ENCODE measurements at regions of chr6 and their contacts with region 1.

Region 1: GRCh38 chr6:2931970-2932748 is 29.1 kb upstream of the SERPINB9 start:
- DNase-seq: peak; percentile 70 to 88 (median 74)
- H3K4me3 ChIP-seq: peak overlapping the region; percentile 24
- H3K4me3 Mint-ChIP-seq: peak overlapping the region in 2 of 7 donors; percentile 29 to 41
- H3K27ac ChIP-seq: no peak overlapping the region
- H3K27ac Mint-ChIP-seq: peak overlapping the region in 6 of 8 donors; percentile 1 to 41 (median 27)
- H3K4me1 ChIP-seq: peaks cover 20% of the 10 kb centered on the region
- H3K4me1 Mint-ChIP-seq: peaks cover 22 to 26% (median 23%) of the 10 kb centered on the region in 3 donors
- H3K27me3 ChIP-seq: no peaks in the 10 kb centered on the region
- H3K27me3 Mint-ChIP-seq: no peaks in the 10 kb centered on the region

Region 2: GRCh38 chr6:2841264-2842138 is 90.7 kb before region 1 on chr6 and contains the start of gene SERPINB1:
- CTCF ChIA-PET with region 1: interaction called, 196 read pairs
- POLR2A ChIA-PET with region 1: interaction called, 12 read pairs
- DNase-seq: peak; percentile 55 to 82 (median 69)
- H3K4me3 ChIP-seq: peak within 1 kb of the TSS; percentile 82
- H3K4me3 Mint-ChIP-seq: peak within 1 kb of the TSS; percentile 88 to 95 (median 90)
- H3K27ac ChIP-seq: peak within 1 kb of the TSS; percentile 82
- H3K27ac Mint-ChIP-seq: peak within 1 kb of the TSS; percentile 90 to 98 (median 94)
- H3K4me1 ChIP-seq: peaks cover 33% of the 10 kb centered on the region
- H3K4me1 Mint-ChIP-seq: peaks cover 43 to 60% (median 52%) of the 10 kb centered on the region in 3 donors
- H3K27me3 ChIP-seq: no peaks in the 10 kb centered on the region
- H3K27me3 Mint-ChIP-seq: no peaks in the 10 kb centered on the region
- total RNA-seq, gene SERPINB1: 40.4 to 42.4 TPM

Region 3: DNA sequence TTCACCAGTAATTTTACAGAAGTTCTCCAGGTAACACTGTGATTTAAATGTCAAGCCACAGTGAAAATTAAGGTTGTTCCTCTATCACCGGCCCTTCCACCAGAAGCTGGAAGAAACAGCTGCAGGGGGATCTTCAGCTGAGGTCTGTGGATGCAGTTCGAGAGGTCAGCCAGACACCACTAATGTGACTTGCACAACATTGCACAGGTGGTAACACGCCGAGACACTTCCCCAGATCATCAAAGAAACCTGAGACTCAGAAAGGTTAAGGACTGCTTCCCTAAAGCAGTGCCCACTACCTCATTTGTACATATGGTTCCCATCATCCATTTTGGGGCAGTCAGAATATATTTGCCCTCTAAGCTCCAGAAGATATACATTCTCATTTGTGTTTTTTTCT is 21.0 kb before region 1 on chr6:
- CTCF ChIA-PET with region 1: interaction called, 20 read pairs
- POLR2A ChIA-PET with region 1: no interaction called
- DNase-seq: no peak
- H3K4me3 ChIP-seq: no peak overlapping the region
- H3K4me3 Mint-ChIP-seq: no peak overlapping the region
- H3K27ac ChIP-seq: no peak overlapping the region
- H3K27ac Mint-ChIP-seq: no peak overlapping the region
- H3K4me1 ChIP-seq: no peaks in the 10 kb centered on the region
- H3K4me1 Mint-ChIP-seq: peaks cover 8 to 22% (median 22%) of the 10 kb centered on the region in 3 donors
- H3K27me3 ChIP-seq: no peaks in the 10 kb centered on the region
- H3K27me3 Mint-ChIP-seq: no peaks in the 10 kb centered on the region

Region 4: GRCh38 chr6:2952557-2953095 is 20.5 kb after region 1 on chr6:
- CTCF ChIA-PET with region 1: interaction called, 40 read pairs
- POLR2A ChIA-PET with region 1: no interaction called
- DNase-seq: peak in 4 of 5 donors; percentile 13 to 63 (median 24)
- H3K4me3 ChIP-seq: no peak overlapping the region
- H3K4me3 Mint-ChIP-seq: no peak overlapping the region
- H3K27ac ChIP-seq: no peak overlapping the region
- H3K27ac Mint-ChIP-seq: peak overlapping the region in 2 of 8 donors; percentile 62 to 81
- H3K4me1 ChIP-seq: peaks cover 4% of the 10 kb centered on the region
- H3K4me1 Mint-ChIP-seq: no peaks in the 10 kb centered on the region
- H3K27me3 ChIP-seq: no peaks in the 10 kb centered on the region
- H3K27me3 Mint-ChIP-seq: no peaks in the 10 kb centered on the region

Region 5: GRCh38 chr6:3119040-3119723 is 187.0 kb after region 1 on chr6:
- CTCF ChIA-PET with region 1: no interaction called
- POLR2A ChIA-PET with region 1: interaction called, 16 read pairs
- DNase-seq: no peak
- H3K4me3 ChIP-seq: peak overlapping the region; percentile 75
- H3K4me3 Mint-ChIP-seq: peak overlapping the region; percentile 87 to 97 (median 91)
- H3K27ac ChIP-seq: peak overlapping the region; percentile 90
- H3K27ac Mint-ChIP-seq: peak overlapping the region; percentile 9 to 96 (median 74)
- H3K4me1 ChIP-seq: peaks cover 13% of the 10 kb centered on the region
- H3K4me1 Mint-ChIP-seq: peaks cover 16 to 18% (median 16%) of the 10 kb centered on the region in 3 donors
- H3K27me3 ChIP-seq: no peaks in the 10 kb centered on the region
- H3K27me3 Mint-ChIP-seq: no peaks in the 10 kb centered on the region

Measured in CD8-positive, alpha-beta memory T cell (primary cell).